ENCODE measurements at regions of chr6 and their contacts with region 1.

Region 1: DNA sequence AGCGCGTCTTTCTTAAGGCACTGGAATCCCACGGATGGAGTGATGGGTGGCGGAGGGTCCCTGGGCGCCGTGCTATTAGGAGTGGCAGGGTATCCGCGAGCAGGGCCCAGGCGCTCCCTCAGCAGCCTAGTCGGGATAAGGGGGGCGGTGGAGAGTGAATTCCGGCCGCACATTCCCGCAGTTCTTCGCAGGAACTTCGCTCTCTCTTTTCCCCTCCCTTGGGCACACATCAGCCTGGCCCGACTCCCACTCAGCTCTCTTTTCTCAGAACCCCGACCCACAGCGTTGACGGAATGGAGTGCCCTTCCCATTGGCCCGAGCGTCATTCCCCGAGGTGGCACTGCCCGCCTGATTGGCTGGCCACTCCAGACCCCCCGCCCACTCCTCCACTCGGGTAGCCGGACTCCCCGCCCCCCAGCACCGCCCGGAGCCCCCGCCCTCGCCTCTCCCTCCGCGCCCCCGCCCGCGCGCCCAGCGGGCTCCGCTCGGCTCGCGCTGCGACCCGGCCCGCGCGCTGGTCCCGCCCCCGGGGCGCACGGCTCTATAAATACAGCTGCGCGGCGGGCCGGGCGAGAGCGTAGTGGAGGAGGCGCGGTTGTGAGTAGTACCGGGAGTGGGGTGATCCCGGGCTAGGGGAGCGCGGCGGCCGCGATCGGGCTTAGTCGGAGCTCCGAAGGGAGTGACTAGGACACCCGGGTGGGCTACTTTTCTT is at the start of gene ID4:
- DNase-seq: peak; percentile 84 to 89
- ATAC-seq: peak; percentile 83
- H3K4me3 ChIP-seq: peak within 1 kb of the TSS; percentile 66 to 74 (median 71)
- H3K27ac ChIP-seq: peak within 1 kb of the TSS; percentile 61 to 82 (median 80)
- H3K4me1 ChIP-seq: peaks cover 5 to 8% of the 10 kb centered on the region in 2 donors
- H3K27me3 ChIP-seq: peaks cover 0 to 8% (median 5%) of the 10 kb centered on the region in 3 donors
- CTCF ChIP-seq: no peak
- POLR2A ChIP-seq: peak; percentile 92 to 96
- total RNA-seq, gene ID4: 0.36 to 5.8 (median 1.3) TPM

Region 2: GRCh38 chr6:19804205-19805123 is 32.5 kb before region 1 on chr6:
- in situ Hi-C with region 1: no loop called
- intact Hi-C with region 1: loop called (anchors 1 kb)
- DNase-seq: peak; percentile 85 to 94
- ATAC-seq: peak; percentile 94 to 96
- H3K4me3 ChIP-seq: peak overlapping the region; percentile 56 to 85 (median 66)
- H3K27ac ChIP-seq: peak overlapping the region; percentile 67 to 96 (median 88)
- H3K4me1 ChIP-seq: peaks cover 3 to 14% of the 10 kb centered on the region in 2 donors
- H3K27me3 ChIP-seq: no peaks in the 10 kb centered on the region
- CTCF ChIP-seq: no peak
- POLR2A ChIP-seq: peak; percentile 73 to 78

Measured in gastrocnemius medialis (tissue), 4 donors.